Heart left ventricle (tissue), 16 donors: ENCODE measurements at regions of chr14 and their contacts with region 1.

Region 1: GRCh38 chr14:33938131-33938949 is 12.5 kb downstream of the EGLN3 start:
- DNase-seq: peak; percentile 80 to 89 (median 88)
- ATAC-seq: peak; percentile 94 to 97 (median 96)
- H3K4me3 ChIP-seq: peak overlapping the region in 9 of 12 donors; percentile 6 to 41 (median 27)
- H3K27ac ChIP-seq: peak overlapping the region; percentile 57 to 88 (median 80)
- H3K4me1 ChIP-seq: peaks cover 0 to 80% (median 46%) of the 10 kb centered on the region in 12 donors
- H3K27me3 ChIP-seq: no peaks in the 10 kb centered on the region
- CTCF ChIP-seq: no peak
- POLR2A ChIP-seq: no peak

Region 2: DNA sequence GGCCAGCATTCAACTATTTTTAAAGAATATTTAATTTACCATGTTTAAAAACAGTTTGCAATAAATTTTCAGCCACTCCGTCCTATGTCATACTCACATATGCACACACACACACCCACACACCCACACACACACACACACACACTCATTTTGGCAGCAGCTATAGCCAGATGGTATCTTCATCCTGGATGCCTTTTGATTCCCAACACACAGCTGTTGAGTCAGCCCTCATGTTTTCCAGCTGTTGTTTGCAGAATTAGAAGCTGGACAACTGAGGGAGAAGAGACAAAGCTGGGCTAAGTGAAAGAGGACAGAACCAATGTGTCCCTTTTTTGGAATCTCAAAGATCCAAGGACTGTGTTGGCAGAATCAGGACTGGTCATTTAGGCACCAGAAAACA is 92.5 kb after region 1 on chr14:
- intact Hi-C with region 1: loop called in 1 of 10 experiments (anchors 5 kb)
- DNase-seq: peak in 4 of 5 donors; percentile 57 to 68 (median 63)
- ATAC-seq: peak; percentile 28 to 71 (median 54)
- H3K4me3 ChIP-seq: no peak overlapping the region
- H3K27ac ChIP-seq: peak overlapping the region in 11 of 12 donors; percentile 18 to 76 (median 63)
- H3K4me1 ChIP-seq: peaks cover 0 to 40% (median 23%) of the 10 kb centered on the region in 12 donors
- H3K27me3 ChIP-seq: no peaks in the 10 kb centered on the region
- CTCF ChIP-seq: no peak
- POLR2A ChIP-seq: no peak

Region 3: DNA sequence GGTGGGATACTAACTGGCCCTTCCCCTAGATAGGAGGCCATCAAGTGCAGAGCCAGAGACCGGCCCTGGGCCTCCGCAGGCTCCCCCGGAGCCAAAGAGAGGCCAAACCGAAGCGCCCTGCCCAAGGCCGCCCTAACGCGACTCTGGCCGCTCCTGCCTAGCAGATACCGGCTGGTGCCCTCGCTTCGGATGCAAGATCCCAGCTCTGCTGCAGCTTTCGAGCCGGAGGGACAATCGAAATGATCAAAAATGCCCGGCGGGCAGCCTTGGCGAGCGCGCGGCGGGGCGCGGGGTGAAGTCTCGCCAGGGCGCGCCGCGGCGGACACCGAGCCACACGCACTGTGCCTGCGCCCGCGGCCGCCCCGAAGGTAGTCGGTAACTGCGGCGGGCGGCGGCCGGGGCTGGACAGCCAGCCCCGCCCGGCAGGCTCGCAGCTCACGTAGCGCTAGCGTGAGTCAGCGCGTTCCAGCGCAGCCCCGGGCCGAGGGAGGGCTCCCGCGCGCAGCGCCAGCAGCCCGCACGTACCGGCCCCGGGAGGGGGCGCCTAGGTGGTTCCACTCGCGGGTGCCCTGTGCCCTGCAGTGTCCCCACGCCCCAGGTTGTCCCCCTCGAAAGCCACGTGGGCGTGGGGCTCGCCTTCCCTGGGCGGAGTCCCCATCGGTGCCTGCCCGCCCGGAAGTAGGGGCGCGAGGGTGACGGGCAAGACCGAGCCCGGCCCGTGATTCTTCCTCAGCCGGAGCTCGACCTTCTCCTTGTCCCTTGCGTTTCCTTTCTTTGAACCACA is 121.7 kb after region 1 on chr14:
- intact Hi-C with region 1: loop called in 4 of 10 experiments (anchors 5 to 10 kb)
- DNase-seq: peak; percentile 83 to 91 (median 87)
- ATAC-seq: peak; percentile 57 to 96 (median 93)
- H3K4me3 ChIP-seq: peak overlapping the region; percentile 37 to 82 (median 64)
- H3K27ac ChIP-seq: peak overlapping the region; percentile 83 to 98 (median 95)
- H3K4me1 ChIP-seq: peaks cover 0 to 43% (median 29%) of the 10 kb centered on the region in 12 donors
- H3K27me3 ChIP-seq: no peaks in the 10 kb centered on the region
- CTCF ChIP-seq: peak; percentile 6 to 54 (median 38)
- POLR2A ChIP-seq: peak; percentile 24 to 76

Region 4: DNA sequence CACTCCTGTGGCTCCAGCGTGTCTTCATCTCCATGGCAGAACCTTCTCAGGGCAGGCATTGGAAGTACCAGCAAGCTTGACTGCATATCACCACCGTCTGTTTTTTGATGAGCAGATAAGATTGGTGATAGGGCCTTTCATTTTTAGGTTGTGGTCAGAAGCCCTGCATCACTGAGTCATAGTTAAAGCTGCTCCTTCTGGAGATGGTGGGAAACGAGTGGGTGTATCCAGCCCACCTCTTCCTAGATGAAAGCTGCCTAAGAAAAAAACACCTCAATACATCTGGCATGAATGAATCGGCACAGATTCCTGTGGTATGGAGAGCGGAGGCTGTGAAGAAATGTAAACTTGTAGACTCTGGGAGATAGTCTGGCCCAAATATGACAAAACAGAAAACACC is 261.2 kb after region 1 on chr14:
- intact Hi-C with region 1: no loop called
- DNase-seq: no peak
- ATAC-seq: peak in 1 of 4 donors; percentile 31
- H3K4me3 ChIP-seq: no peak overlapping the region
- H3K27ac ChIP-seq: no peak overlapping the region
- H3K4me1 ChIP-seq: no peaks in the 10 kb centered on the region
- H3K27me3 ChIP-seq: no peaks in the 10 kb centered on the region
- CTCF ChIP-seq: no peak
- POLR2A ChIP-seq: no peak